GM18951 (cell line): ENCODE measurements at regions of chr5 and their contacts with region 1.

Region 1: DNA sequence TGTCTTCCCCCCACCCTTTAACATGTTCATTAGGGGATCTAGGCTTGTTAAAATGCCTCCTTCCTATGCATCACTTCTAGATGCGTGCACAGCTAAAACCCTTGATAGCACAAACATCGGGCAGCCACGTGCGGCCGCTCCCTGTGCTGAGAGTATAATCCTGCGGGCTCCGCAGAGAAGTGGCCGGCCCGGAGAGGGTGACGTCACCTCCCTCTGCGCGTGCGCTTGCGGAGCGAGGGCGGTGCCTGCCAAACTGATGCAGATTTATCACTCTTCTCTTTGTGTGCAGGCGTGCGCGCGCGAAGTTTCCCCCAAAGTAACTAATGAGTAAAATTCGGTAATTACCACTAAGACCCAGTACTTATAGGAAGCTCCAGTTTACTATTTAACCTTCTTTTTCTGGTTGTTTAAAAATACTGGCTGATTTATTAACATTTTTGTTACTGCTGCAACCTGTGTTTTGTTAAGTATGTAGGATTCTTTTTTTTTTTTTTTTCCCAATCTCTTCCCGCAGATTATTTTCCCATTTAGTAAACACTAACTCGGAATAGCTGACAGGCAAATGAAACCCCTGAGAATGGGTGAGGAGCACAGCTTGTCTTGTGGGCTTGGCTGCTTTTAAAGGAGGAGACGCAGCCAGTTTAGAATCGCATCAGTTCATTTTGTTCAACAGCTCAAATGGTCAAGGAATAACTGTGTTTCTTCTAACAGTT is 121.6 kb downstream of the TRIO start:
- POLR2A ChIP-seq: peak; percentile 69

Region 2: DNA sequence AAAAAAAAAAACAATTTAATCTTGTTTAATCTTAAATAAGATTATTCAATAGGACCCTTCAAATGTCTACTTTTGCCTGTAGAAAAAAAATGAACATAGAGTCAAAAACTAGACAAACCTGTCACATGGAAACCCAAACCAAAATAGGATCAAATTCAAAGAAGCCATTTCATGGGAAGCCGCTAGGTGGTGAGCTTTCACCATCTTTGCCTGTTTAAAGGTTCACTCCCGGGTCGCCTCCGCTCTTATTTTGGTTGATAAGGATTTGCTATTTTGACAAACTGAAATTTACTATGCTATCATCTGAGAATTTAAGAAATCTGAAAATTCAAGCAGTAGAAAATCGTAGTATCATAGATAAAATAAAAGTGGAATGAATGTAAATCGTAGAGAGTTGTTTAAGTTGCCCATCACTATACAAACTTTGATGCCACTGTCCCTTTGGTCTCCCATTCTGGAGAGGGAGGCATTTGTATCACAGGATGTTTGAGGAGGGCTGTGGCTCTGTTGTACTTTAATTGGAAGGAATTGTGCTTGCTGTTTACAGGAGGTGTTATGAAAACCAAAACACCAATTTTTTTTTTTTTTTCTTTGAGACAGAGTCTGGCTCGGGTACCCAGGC is 276.8 kb before region 1 on chr5:
- in situ Hi-C with region 1: loop called (anchors 25 kb)
- POLR2A ChIP-seq: no peak

Region 3: GRCh38 chr5:14501353-14502293 is 236.9 kb after region 1 on chr5:
- in situ Hi-C with region 1: no loop called
- POLR2A ChIP-seq: no peak